Tibial artery (tissue), 4 donors: ENCODE measurements at regions of chr1 and their contacts with region 1.

Region 1: GRCh38 chr1:154884869-154885701 is 15.0 kb upstream of the KCNN3 start:
- DNase-seq: no peak
- H3K4me3 ChIP-seq: no peak overlapping the region
- H3K27ac ChIP-seq: no peak overlapping the region
- H3K4me1 ChIP-seq: no peaks in the 10 kb centered on the region
- H3K27me3 ChIP-seq: no peaks in the 10 kb centered on the region
- CTCF ChIP-seq: no peak

Region 2: GRCh38 chr1:154493276-154493675 is 391.8 kb before region 1 on chr1:
- intact Hi-C with region 1: loop called (anchors 10 kb)
- DNase-seq: peak in 1 of 2 donors; percentile 42
- H3K4me3 ChIP-seq: no peak overlapping the region
- H3K27ac ChIP-seq: no peak overlapping the region
- H3K4me1 ChIP-seq: peaks cover 0 to 3% (median 0%) of the 10 kb centered on the region in 4 donors
- H3K27me3 ChIP-seq: peaks cover 0 to 58% of the 10 kb centered on the region in 2 donors
- CTCF ChIP-seq: no peak

Region 3: GRCh38 chr1:154669464-154670282 is 215.4 kb before region 1 on chr1:
- intact Hi-C with region 1: loop called (anchors 10 kb)
- DNase-seq: peak; percentile 60 to 73
- H3K4me3 ChIP-seq: no peak overlapping the region
- H3K27ac ChIP-seq: no peak overlapping the region
- H3K4me1 ChIP-seq: no peaks in the 10 kb centered on the region
- H3K27me3 ChIP-seq: peaks cover 0 to 6% of the 10 kb centered on the region in 2 donors
- CTCF ChIP-seq: peak; percentile 56 to 58

Region 4: DNA sequence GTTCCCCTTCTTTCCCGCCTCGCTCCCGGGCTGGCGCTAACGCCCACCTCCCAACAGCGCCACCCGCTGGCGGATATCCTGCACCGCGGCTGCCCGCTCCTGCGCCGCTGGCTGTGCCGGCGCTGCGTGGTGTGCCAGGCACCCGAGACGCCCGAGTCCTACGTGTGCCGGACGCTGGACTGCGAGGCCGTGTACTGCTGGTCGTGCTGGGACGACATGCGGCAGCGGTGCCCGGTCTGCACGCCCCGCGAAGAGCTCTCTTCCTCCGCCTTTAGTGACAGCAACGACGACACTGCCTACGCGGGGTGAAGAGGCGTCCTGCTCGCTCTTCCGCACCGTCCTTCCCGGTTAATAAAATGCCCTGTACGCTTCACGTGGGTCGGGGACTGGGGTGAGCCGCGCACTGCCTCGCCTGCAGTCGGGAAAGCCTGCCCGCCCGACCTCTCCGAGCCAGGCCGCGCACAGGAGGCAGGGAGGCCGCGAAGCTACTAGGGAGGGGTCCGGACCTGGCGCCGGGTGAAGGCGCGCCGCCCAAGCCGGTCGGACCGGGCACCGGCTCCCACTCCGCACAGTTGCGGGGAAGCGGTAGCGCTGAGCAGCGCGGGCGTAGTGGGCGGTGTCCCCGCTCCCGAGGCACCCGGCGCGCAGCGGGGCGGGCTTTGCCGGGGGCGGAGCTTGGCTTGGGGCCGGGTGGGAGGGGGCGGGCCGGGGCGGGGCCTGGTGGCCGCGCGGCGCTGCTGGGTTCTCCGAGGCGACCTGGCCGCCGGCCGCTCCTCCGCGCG is 165.7 kb after region 1 on chr1 and contains the start of gene ADAM15:
- intact Hi-C with region 1: no loop called
- DNase-seq: peak; percentile 76 to 91
- H3K4me3 ChIP-seq: peak within 1 kb of the TSS; percentile 68 to 71
- H3K27ac ChIP-seq: peak within 1 kb of the TSS; percentile 72 to 91
- H3K4me1 ChIP-seq: peaks cover 6 to 30% (median 22%) of the 10 kb centered on the region in 4 donors
- H3K27me3 ChIP-seq: no peaks in the 10 kb centered on the region
- CTCF ChIP-seq: peak; percentile 86 to 92